OCI-LY7 (cell line): ENCODE measurements at regions of chr12 and their contacts with region 1.

Region 1: GRCh38 chr12:64560396-64561304 is 49.6 kb upstream of the RASSF3 start:
- DNase-seq: no peak
- H3K4me3 ChIP-seq: no peak overlapping the region
- H3K27ac ChIP-seq: no peak overlapping the region
- H3K4me1 ChIP-seq: no peaks in the 10 kb centered on the region
- CTCF ChIP-seq: no peak

Region 2: DNA sequence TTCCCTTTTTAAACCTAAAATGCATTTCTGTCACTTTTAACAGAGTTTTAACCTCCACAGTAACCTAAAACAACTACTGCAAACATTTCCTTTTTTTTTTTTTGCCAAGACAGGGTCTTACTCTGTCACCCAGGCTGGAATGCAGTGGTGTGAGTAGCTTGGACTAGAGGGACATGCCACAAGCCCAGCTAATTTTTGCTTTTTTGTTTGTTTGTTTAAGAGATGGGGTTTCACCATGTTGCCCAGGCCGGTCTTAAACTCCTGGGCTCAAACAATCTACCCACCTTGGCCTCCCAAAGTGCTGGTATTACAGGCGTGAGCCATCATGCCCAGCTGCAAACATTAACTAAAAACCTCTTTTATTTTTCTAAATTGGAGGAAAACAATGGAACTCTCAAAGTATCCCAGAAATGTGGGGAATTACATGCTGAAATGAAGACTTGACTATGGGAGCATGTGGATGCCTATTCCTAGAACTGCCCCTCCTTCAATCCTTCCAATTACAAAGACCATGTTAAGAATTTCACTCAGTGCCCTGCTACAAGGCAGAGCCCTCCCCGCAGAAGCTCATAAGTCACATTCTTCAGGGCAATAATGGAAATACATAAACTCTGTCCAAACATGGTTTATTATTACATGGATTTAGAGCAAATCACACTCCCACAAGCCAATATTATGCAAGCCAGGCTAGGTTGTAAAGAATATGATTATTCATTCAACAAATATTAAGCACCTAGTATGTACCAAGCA is 237.0 kb before region 1 on chr12:
- CTCF ChIA-PET with region 1: interaction called, 12 read pairs
- POLR2A ChIA-PET with region 1: no interaction called
- intact Hi-C with region 1: no loop called
- DNase-seq: no peak
- H3K4me3 ChIP-seq: no peak overlapping the region
- H3K27ac ChIP-seq: no peak overlapping the region
- H3K4me1 ChIP-seq: no peaks in the 10 kb centered on the region
- CTCF ChIP-seq: no peak